CD4-positive, alpha-beta T cell (primary cell): ENCODE measurements at regions of chr2 and their contacts with region 1.

Region 1: DNA sequence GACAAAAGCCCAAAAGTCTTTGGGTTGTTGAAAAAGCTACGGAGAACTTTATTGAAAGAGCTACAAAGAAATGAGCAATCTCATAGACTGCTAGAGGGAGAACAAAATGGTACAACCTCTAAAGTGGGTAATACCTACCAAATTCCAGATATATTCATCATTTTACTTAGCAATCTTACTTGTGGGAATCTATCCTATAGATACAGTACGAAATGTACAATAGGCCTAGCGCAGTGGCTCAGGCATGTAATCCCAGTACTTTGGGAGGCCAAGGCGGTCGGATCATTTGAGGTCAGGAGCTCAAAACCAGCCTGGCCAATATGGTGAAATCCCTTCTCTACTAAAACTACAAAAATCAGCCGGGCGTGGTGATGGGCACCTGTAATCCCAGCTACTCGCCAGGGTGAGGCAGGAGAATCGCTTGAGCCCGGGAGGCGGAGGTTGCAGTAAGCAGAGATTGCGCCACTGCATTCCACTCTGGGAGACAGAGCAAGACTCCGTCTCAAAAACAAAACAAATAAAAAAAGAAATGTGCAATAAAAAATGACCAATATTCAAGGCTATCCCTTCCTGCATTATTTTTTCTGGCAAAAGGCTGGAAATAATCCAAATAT is 10.1 kb downstream of the EXOC6B start:
- DNase-seq: no peak
- ATAC-seq: no peak
- H3K4me3 ChIP-seq: no peak overlapping the region
- H3K4me3 Mint-ChIP-seq: no peak overlapping the region
- H3K27ac ChIP-seq: no peak overlapping the region
- H3K27ac Mint-ChIP-seq: no peak overlapping the region
- H3K4me1 ChIP-seq: no peaks in the 10 kb centered on the region
- H3K4me1 Mint-ChIP-seq: peaks cover 34% of the 10 kb centered on the region
- H3K27me3 ChIP-seq: no peaks in the 10 kb centered on the region
- H3K27me3 Mint-ChIP-seq: no peaks in the 10 kb centered on the region
- CTCF ChIP-seq: no peak

Region 2: GRCh38 chr2:72778410-72778809 is 37.4 kb before region 1 on chr2:
- CTCF ChIA-PET with region 1: no interaction called
- POLR2A ChIA-PET with region 1: no interaction called
- intact Hi-C with region 1: loop called in 1 of 2 experiments (anchors 5 kb)
- DNase-seq: no peak
- ATAC-seq: no peak
- H3K4me3 ChIP-seq: no peak overlapping the region
- H3K4me3 Mint-ChIP-seq: no peak overlapping the region
- H3K27ac ChIP-seq: no peak overlapping the region
- H3K27ac Mint-ChIP-seq: no peak overlapping the region
- H3K4me1 ChIP-seq: no peaks in the 10 kb centered on the region
- H3K4me1 Mint-ChIP-seq: no peaks in the 10 kb centered on the region
- H3K27me3 ChIP-seq: no peaks in the 10 kb centered on the region
- H3K27me3 Mint-ChIP-seq: no peaks in the 10 kb centered on the region
- CTCF ChIP-seq: no peak

Region 3: DNA sequence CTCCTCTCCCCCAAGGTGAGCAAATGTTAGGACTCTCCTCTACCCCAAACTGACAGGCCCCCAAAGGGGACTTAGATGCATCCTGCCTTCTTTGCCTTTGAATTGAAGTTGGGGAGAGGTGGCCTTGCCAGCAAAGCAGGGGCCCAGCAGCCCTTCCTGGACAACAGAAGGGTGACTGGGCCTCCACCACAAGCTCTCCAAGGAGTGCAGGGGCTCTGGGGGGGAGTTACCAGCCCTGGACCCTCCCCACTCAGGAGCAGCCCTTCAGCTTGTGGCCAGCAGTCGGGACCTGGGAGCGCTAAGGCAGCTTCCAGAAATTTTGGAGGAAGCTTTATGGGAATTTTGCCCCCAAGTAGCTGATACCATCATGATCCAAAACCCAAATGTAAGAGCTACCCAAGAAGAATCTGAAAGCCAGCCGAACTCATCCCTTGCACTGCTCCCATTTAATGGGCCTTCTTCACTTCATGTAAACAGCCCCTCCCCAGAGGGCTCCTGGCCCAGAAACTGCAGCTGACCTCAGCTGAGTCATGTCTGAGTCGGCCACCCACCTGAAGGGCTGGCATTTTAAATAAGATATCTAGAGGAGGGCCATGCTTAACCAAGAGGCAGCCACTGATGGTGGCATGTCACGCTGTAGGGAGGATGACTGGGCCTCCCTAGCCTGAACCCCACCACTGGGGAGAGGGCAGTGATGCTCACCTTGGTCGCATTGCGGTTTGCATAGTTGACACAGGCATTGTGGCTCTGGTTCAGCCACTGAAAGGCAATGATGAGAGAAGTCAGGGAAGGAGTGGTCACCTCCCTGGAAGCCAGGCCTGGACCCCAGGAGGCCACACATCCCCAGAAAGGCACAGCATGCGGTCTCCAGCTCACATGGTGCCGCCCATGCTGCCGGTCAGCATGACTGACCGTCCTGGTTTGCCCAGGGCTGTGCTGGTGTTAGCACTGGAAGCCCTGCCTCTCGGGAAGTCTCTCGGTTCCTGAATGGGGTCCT is 184.3 kb after region 1 on chr2:
- CTCF ChIA-PET with region 1: no interaction called
- POLR2A ChIA-PET with region 1: no interaction called
- intact Hi-C with region 1: no loop called
- DNase-seq: no peak
- ATAC-seq: no peak
- H3K4me3 ChIP-seq: no peak overlapping the region
- H3K4me3 Mint-ChIP-seq: no peak overlapping the region
- H3K27ac ChIP-seq: no peak overlapping the region
- H3K27ac Mint-ChIP-seq: no peak overlapping the region
- H3K4me1 ChIP-seq: no peaks in the 10 kb centered on the region
- H3K4me1 Mint-ChIP-seq: no peaks in the 10 kb centered on the region
- H3K27me3 ChIP-seq: no peaks in the 10 kb centered on the region
- H3K27me3 Mint-ChIP-seq: no peaks in the 10 kb centered on the region
- CTCF ChIP-seq: no peak

Region 4: GRCh38 chr2:73112913-73113633 is 297.3 kb after region 1 on chr2 and contains the start of gene RAB11FIP5:
- CTCF ChIA-PET with region 1: no interaction called
- POLR2A ChIA-PET with region 1: no interaction called
- intact Hi-C with region 1: no loop called
- DNase-seq: peak; percentile 58 to 93 (median 75)
- ATAC-seq: peak; percentile 90
- H3K4me3 ChIP-seq: peak within 1 kb of the TSS; percentile 84
- H3K4me3 Mint-ChIP-seq: peak within 1 kb of the TSS; percentile 86
- H3K27ac ChIP-seq: peak within 1 kb of the TSS in 1 of 2 donors; percentile 21
- H3K27ac Mint-ChIP-seq: peak within 1 kb of the TSS; percentile 65
- H3K4me1 ChIP-seq: peaks cover 35% of the 10 kb centered on the region
- H3K4me1 Mint-ChIP-seq: peaks cover 27% of the 10 kb centered on the region
- H3K27me3 ChIP-seq: no peaks in the 10 kb centered on the region
- H3K27me3 Mint-ChIP-seq: no peaks in the 10 kb centered on the region
- CTCF ChIP-seq: no peak
- total RNA-seq, gene RAB11FIP5: 12.6 to 13.8 TPM

Region 5: GRCh38 chr2:73197579-73197978 is 381.8 kb after region 1 on chr2:
- CTCF ChIA-PET with region 1: no interaction called
- POLR2A ChIA-PET with region 1: no interaction called
- intact Hi-C with region 1: no loop called
- DNase-seq: no peak
- ATAC-seq: no peak
- H3K4me3 ChIP-seq: no peak overlapping the region
- H3K4me3 Mint-ChIP-seq: no peak overlapping the region
- H3K27ac ChIP-seq: no peak overlapping the region
- H3K27ac Mint-ChIP-seq: no peak overlapping the region
- H3K4me1 ChIP-seq: peaks cover 8% of the 10 kb centered on the region
- H3K4me1 Mint-ChIP-seq: peaks cover 7% of the 10 kb centered on the region
- H3K27me3 ChIP-seq: peaks cover 11 to 24% of the 10 kb centered on the region in 2 experiments
- H3K27me3 Mint-ChIP-seq: peaks cover 53% of the 10 kb centered on the region
- CTCF ChIP-seq: no peak